ENCODE measurements at regions of chr2 and their contacts with region 1.

Region 1: GRCh38 chr2:208040199-208041171 is 15.2 kb upstream of the PLEKHM3 start:
- DNase-seq: peak; percentile 37 to 58 (median 55)
- H3K4me3 ChIP-seq: no peak overlapping the region
- H3K4me3 Mint-ChIP-seq: no peak overlapping the region
- H3K27ac ChIP-seq: no peak overlapping the region
- H3K27ac Mint-ChIP-seq: peak overlapping the region in 3 of 7 donors; percentile 31 to 42 (median 42)
- H3K4me1 ChIP-seq: no peaks in the 10 kb centered on the region
- H3K4me1 Mint-ChIP-seq: no peaks in the 10 kb centered on the region
- H3K27me3 ChIP-seq: no peaks in the 10 kb centered on the region
- H3K27me3 Mint-ChIP-seq: peaks cover 0 to 2% of the 10 kb centered on the region in 2 donors

Region 2: DNA sequence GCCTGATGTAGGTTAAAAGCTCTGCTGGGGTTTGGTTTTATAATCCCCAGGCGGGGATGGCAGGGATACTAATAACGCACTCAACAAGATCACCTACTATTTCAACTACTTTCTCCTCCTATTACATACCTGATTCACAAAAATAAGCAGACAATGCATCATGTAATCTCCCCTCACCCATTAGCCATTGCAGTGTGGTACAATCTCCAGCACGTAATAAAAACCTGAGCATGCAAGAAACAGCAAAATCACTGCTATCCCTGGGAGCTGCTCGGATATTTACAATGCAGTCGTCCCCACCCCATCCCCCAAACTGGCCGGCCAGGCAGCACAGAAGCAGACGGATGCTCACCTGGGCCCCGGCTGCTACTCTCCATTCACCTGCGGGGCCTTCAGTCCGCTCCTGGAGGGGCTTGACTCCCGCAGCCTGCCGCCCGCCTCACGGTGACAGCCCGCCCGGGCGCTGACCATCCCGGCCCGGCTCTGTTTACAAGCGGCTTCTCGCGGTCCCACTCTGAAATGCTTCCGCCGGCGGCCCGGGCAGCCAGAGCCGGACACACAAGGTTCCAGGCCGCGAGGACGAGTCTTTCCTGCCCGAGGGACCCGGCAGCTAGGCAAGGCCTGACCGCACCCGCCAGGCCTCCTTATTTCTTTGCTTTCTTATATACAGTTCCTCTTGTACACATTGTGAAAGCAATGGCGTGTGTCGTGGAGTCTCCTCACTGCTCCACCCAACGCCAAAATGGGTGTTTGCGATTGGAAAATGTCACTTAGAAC is 15.3 kb before region 1 on chr2 and contains the start of gene PLEKHM3:
- CTCF ChIA-PET with region 1: interaction called, 18 read pairs
- POLR2A ChIA-PET with region 1: interaction called, 14 read pairs
- intact Hi-C with region 1: loop called (anchors 2 kb)
- DNase-seq: peak; percentile 43 to 69 (median 61)
- H3K4me3 ChIP-seq: peak within 1 kb of the TSS; percentile 83 to 92
- H3K4me3 Mint-ChIP-seq: peak within 1 kb of the TSS; percentile 90 to 98 (median 93)
- H3K27ac ChIP-seq: peak within 1 kb of the TSS; percentile 71
- H3K27ac Mint-ChIP-seq: peak within 1 kb of the TSS; percentile 45 to 96 (median 95)
- H3K4me1 ChIP-seq: peaks cover 14% of the 10 kb centered on the region
- H3K4me1 Mint-ChIP-seq: peaks cover 14 to 28% (median 19%) of the 10 kb centered on the region in 4 donors
- H3K27me3 ChIP-seq: no peaks in the 10 kb centered on the region
- H3K27me3 Mint-ChIP-seq: no peaks in the 10 kb centered on the region
- total RNA-seq, gene PLEKHM3: 14.7 to 16.1 TPM